Panc1 (cell line): ENCODE measurements at regions of chr2 and their contacts with region 1.

Region 1: GRCh38 chr2:132416081-132416881 is at the start of gene GPR39:
- DNase-seq: peak; percentile 88
- ATAC-seq: peak; percentile 89
- H3K4me3 ChIP-seq: peak within 1 kb of the TSS; percentile 57 to 79
- H3K27ac ChIP-seq: peak within 1 kb of the TSS; percentile 75
- H3K4me1 ChIP-seq: peaks cover 38% of the 10 kb centered on the region
- H3K27me3 ChIP-seq: no peaks in the 10 kb centered on the region
- CTCF ChIP-seq: no peak
- total RNA-seq, gene GPR39: 9.0 TPM

Region 2: DNA sequence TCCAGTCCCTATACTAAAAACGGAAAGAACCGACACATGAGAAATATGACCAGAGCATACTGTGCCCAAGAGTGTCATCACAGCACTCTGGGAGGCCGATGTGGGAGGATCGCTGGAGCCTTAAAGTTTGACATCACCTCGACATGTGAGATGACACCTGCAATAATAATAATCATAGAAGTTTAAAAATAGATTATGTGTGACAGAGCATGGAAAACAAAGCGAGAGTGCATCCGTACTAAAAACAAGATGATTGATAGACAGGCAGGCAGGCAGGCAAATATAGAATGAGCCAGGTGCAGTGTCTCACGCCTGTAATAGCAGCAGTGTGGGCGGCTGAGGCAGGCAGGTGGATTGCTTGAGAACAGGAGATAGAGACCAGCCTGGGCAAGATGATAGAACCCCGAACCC is 139.7 kb before region 1 on chr2:
- CTCF ChIA-PET with region 1: no interaction called
- POLR2A ChIA-PET with region 1: no interaction called
- in situ Hi-C with region 1: no loop called
- intact Hi-C with region 1: loop called (anchors 10 kb)
- DNase-seq: no peak
- ATAC-seq: no peak
- H3K4me3 ChIP-seq: no peak overlapping the region
- H3K27ac ChIP-seq: no peak overlapping the region
- H3K4me1 ChIP-seq: no peaks in the 10 kb centered on the region
- H3K27me3 ChIP-seq: no peaks in the 10 kb centered on the region
- CTCF ChIP-seq: no peak

Region 3: GRCh38 chr2:132438691-132439090 is 22.4 kb after region 1 on chr2:
- CTCF ChIA-PET with region 1: interaction called, 4 read pairs
- POLR2A ChIA-PET with region 1: no interaction called
- in situ Hi-C with region 1: no loop called
- intact Hi-C with region 1: loop called (anchors 2 kb)
- DNase-seq: peak; percentile 94
- ATAC-seq: peak; percentile 95
- H3K4me3 ChIP-seq: peak overlapping the region in 1 of 2 experiments; percentile 30; a peak in 2 of 4 replicates
- H3K27ac ChIP-seq: peak overlapping the region; percentile 92
- H3K4me1 ChIP-seq: peaks cover 49% of the 10 kb centered on the region
- H3K27me3 ChIP-seq: no peaks in the 10 kb centered on the region
- CTCF ChIP-seq: no peak